T-cell (primary cell): ENCODE measurements at regions of chr3 and their contacts with region 1.

Region 1: DNA sequence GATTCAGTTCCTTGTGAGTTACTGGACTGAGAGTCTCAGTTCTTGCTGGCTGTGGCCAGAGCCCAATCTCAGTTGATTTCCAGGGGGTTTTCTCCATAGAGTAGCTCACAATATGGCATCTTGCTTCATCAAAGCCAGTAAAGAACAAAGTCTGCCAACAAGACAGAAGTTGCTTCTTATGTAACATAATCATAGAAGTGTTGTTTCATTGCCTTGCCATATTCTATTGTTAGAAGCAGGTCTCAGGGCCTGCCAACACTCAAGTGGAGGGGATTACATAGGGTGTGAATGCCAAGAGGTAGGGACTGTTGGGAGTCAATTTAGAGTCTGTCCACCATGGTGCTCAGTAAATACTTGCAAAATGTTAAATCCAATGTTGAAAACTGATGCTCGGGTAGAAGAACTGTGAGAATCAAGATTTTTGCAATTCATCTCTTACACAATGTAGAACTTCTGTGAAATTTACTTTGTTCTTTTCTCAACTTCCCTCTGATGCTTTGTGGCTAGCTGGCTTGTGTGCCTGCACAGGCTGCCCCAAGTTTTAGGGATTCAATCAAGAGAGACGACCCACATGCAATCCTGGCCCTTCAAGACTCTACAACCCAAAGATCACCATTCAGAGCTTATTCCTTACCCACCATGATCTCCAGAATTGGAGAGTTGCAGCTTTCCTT is 13.3 kb upstream of the PXYLP1 start:
- DNase-seq: no peak
- ATAC-seq: no peak
- H3K4me3 ChIP-seq: no peak overlapping the region
- H3K4me3 Mint-ChIP-seq: no peak overlapping the region
- H3K27ac ChIP-seq: no peak overlapping the region
- H3K27ac Mint-ChIP-seq: no peak overlapping the region
- H3K4me1 ChIP-seq: no peaks in the 10 kb centered on the region
- H3K4me1 Mint-ChIP-seq: no peaks in the 10 kb centered on the region
- H3K27me3 ChIP-seq: peaks cover 0 to 20% of the 10 kb centered on the region in 2 experiments
- H3K27me3 Mint-ChIP-seq: peaks cover 9% of the 10 kb centered on the region in 2 donors

Region 2: GRCh38 chr3:141164852-141165251 is 53.4 kb before region 1 on chr3:
- CTCF ChIA-PET with region 1: no interaction called
- POLR2A ChIA-PET with region 1: no interaction called
- DNase-seq: no peak
- ATAC-seq: no peak
- H3K4me3 ChIP-seq: no peak overlapping the region
- H3K4me3 Mint-ChIP-seq: no peak overlapping the region
- H3K27ac ChIP-seq: no peak overlapping the region
- H3K27ac Mint-ChIP-seq: no peak overlapping the region
- H3K4me1 ChIP-seq: no peaks in the 10 kb centered on the region
- H3K4me1 Mint-ChIP-seq: no peaks in the 10 kb centered on the region
- H3K27me3 ChIP-seq: peaks cover 0 to 4% of the 10 kb centered on the region in 2 experiments
- H3K27me3 Mint-ChIP-seq: peaks cover 3 to 4% of the 10 kb centered on the region in 2 donors

Region 3: GRCh38 chr3:141201122-141201521 is 17.2 kb before region 1 on chr3:
- CTCF ChIA-PET with region 1: interaction called in 1 of 2 experiments, 13 read pairs
- POLR2A ChIA-PET with region 1: no interaction called
- DNase-seq: no peak
- ATAC-seq: no peak
- H3K4me3 ChIP-seq: no peak overlapping the region
- H3K4me3 Mint-ChIP-seq: no peak overlapping the region
- H3K27ac ChIP-seq: no peak overlapping the region
- H3K27ac Mint-ChIP-seq: no peak overlapping the region
- H3K4me1 ChIP-seq: no peaks in the 10 kb centered on the region
- H3K4me1 Mint-ChIP-seq: no peaks in the 10 kb centered on the region
- H3K27me3 ChIP-seq: no peaks in the 10 kb centered on the region
- H3K27me3 Mint-ChIP-seq: peaks cover 14 to 16% of the 10 kb centered on the region in 2 donors